GM12878 (cell line): ENCODE measurements at regions of chr9 and their contacts with region 1.

Region 1: DNA sequence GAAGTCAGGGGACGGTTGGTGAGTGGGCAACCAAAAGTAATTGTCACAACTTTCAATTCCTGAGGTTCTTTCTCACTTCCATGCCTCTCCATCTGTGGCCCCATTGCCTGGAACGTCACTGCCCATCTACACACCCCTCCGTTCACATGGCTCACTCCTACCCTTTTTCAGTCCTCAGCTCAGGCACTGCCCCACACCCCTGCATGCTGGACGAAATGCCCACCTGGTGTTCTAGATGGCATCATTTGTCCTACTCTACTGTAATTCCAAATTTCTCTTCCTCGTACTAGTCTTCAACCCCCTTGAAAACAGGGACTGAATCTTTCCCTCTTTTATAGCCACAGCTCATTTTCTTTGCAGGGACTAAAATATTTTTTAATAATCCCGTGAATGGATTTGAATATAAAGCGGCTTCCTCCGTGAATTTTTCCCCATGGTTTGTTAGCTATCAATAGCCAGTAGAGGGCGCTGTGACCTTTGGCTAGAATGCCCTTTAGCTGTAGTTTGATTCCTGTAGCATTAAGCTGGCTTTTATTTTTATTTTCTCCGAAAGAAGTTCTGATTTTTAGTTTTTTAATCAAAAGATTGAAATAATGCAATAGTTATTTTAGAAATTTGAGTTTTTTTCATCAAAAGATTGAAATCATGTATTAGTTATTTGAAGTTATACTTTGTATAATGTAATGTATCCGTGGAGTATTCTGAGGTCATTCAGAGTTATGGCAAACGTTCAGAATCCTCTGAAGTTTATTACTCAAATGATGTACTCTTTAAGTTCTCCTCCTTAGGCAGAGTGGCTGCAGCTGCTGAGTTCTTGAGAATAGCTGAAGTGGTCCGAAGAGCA is 232.1 kb downstream of the SH3GL2 start:
- DNase-seq: no peak
- ATAC-seq: peak; percentile 75
- H3K4me3 ChIP-seq: no peak overlapping the region
- H3K27ac ChIP-seq: no peak overlapping the region
- H3K4me1 ChIP-seq: no peaks in the 10 kb centered on the region
- H3K27me3 ChIP-seq: no peaks in the 10 kb centered on the region
- CTCF ChIP-seq: peak; percentile 75 to 77 (median 75)
- EP300 ChIP-seq: no peak
- POLR2A ChIP-seq: no peak
- RAD21 ChIP-seq: peak; percentile 96

Region 2: DNA sequence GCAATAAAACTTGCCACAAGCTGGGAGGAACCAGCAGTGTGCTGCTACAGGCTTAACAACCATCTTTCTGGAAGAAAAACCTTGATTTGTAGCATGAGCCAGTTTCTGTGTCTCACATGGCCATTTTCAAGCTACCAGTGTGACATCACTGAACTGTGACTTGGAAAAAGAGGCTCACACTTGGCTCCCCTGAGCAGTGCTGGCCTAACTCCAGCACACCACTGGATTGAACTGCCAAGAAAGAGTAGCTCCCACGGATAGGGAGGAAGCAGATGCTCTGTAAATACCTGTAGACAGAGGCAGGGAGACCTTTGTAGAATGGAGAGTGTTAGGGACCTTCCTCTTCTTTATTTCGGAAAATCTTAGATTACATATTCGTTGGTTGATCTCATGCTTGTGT is 34.2 kb before region 1 on chr9:
- CTCF ChIA-PET with region 1: no interaction called
- POLR2A ChIA-PET with region 1: no interaction called
- RAD21 ChIA-PET with region 1: no interaction called
- SMC1A ChIA-PET with region 1: no interaction called
- in situ Hi-C with region 1: no loop called
- intact Hi-C with region 1: no loop called
- DNase-seq: no peak
- ATAC-seq: no peak
- H3K4me3 ChIP-seq: no peak overlapping the region
- H3K27ac ChIP-seq: no peak overlapping the region
- H3K4me1 ChIP-seq: no peaks in the 10 kb centered on the region
- H3K27me3 ChIP-seq: no peaks in the 10 kb centered on the region
- CTCF ChIP-seq: no peak
- EP300 ChIP-seq: no peak
- POLR2A ChIP-seq: no peak
- RAD21 ChIP-seq: no peak

Region 3: DNA sequence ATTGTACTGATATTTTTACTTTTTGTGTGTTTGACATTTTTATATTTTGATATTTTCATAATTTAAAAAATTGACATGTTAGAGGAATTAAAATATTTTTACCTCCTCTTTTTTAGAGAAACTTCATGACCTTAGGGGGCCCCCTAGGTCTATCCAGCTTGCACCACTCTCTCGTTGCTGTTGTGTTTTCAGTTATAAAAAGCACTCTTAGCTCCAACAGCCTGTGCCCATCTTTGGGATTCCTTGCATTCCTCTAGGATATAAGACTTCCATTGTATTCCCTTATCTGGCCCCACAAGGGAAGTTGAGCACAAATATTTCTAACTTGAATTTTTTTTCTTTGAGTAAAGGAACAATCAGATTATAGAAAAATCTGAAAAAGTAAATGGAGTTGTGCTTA is 13.2 kb after region 1 on chr9:
- CTCF ChIA-PET with region 1: interaction called, 10 read pairs
- POLR2A ChIA-PET with region 1: no interaction called
- RAD21 ChIA-PET with region 1: no interaction called
- SMC1A ChIA-PET with region 1: interaction called, 4 read pairs
- in situ Hi-C with region 1: no loop called
- intact Hi-C with region 1: no loop called
- DNase-seq: no peak
- ATAC-seq: no peak
- H3K4me3 ChIP-seq: no peak overlapping the region
- H3K27ac ChIP-seq: no peak overlapping the region
- H3K4me1 ChIP-seq: no peaks in the 10 kb centered on the region
- H3K27me3 ChIP-seq: peaks cover 0 to 1% of the 10 kb centered on the region in 2 experiments; a peak in 1 of 4 replicates
- CTCF ChIP-seq: no peak
- EP300 ChIP-seq: no peak
- POLR2A ChIP-seq: no peak
- RAD21 ChIP-seq: no peak

Region 4: GRCh38 chr9:17900606-17901005 is 89.7 kb after region 1 on chr9:
- CTCF ChIA-PET with region 1: no interaction called
- POLR2A ChIA-PET with region 1: no interaction called
- RAD21 ChIA-PET with region 1: no interaction called
- SMC1A ChIA-PET with region 1: no interaction called
- in situ Hi-C with region 1: no loop called
- intact Hi-C with region 1: no loop called
- DNase-seq: no peak
- ATAC-seq: no peak
- H3K4me3 ChIP-seq: no peak overlapping the region
- H3K27ac ChIP-seq: no peak overlapping the region
- H3K4me1 ChIP-seq: no peaks in the 10 kb centered on the region
- H3K27me3 ChIP-seq: peaks cover 0 to 3% of the 10 kb centered on the region in 2 experiments
- CTCF ChIP-seq: no peak
- EP300 ChIP-seq: no peak
- POLR2A ChIP-seq: no peak
- RAD21 ChIP-seq: no peak

Region 5: DNA sequence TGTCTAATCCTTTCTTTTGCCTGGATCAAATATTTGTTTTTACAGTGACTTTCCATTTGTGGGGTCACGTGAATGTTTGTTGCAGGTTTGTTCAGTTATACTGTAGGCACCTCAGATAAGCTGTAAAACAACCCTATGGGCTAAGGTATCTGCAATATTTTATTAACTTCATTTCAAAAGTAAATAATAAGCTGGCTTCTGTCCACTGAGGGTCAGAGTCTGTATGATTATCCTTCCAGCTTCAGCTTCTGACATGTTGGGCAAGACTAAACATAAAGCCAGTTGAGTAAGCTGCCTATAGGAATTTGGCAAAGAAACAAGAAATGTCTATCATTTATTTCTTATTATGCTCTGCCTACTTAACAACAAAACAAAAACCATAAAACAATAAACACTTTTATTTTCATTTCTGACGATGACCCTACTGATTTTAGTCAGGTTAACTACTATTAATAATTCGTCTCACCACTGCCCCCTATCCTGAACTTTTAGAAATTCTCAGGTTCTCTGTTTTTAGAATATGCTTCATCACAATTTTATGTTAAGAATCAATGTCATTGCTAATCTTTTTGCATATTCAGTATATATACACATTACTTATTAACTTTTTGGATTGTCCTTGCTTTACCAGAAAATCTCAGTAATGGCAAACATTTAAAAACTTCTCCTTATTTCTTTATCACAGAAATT is 249.4 kb after region 1 on chr9:
- CTCF ChIA-PET with region 1: interaction called, 7 read pairs
- POLR2A ChIA-PET with region 1: no interaction called
- RAD21 ChIA-PET with region 1: interaction called, 5 read pairs
- SMC1A ChIA-PET with region 1: interaction called, 16 read pairs
- in situ Hi-C with region 1: no loop called
- intact Hi-C with region 1: loop called (anchors 2 kb)
- DNase-seq: no peak
- ATAC-seq: no peak
- H3K4me3 ChIP-seq: no peak overlapping the region
- H3K27ac ChIP-seq: no peak overlapping the region
- H3K4me1 ChIP-seq: no peaks in the 10 kb centered on the region
- H3K27me3 ChIP-seq: peaks cover 0 to 1% of the 10 kb centered on the region in 2 experiments; a peak in 1 of 4 replicates
- CTCF ChIP-seq: peak in 2 of 3 experiments; percentile 21 to 32; a peak in 3 of 6 replicates
- EP300 ChIP-seq: no peak
- POLR2A ChIP-seq: no peak
- RAD21 ChIP-seq: no peak

Region 6: DNA sequence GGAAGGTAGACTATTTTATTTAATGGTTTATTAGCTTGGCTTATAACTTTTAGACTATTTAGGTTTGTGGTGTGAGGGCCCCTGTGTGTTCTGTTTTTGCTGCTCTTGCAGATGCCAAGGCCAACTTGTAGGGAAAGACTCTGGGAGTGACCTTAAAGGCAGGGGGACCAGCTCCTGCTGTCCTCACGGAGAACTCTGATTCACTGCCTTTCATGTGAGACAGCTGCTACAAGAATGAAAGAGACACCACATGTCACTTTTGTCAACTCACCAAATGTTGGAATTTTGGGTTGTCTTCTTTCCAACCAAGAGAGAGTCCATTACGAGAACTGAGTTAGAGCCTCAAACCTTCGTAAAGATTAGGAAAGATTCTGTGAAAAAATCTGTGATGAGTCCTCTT is 404.7 kb after region 1 on chr9:
- CTCF ChIA-PET with region 1: interaction called, 153 read pairs
- POLR2A ChIA-PET with region 1: no interaction called
- RAD21 ChIA-PET with region 1: interaction called, 50 read pairs
- SMC1A ChIA-PET with region 1: interaction called, 86 read pairs
- in situ Hi-C with region 1: no loop called
- intact Hi-C with region 1: loop called (anchors 1 kb)
- DNase-seq: no peak
- ATAC-seq: no peak
- H3K4me3 ChIP-seq: no peak overlapping the region
- H3K27ac ChIP-seq: no peak overlapping the region
- H3K4me1 ChIP-seq: no peaks in the 10 kb centered on the region
- H3K27me3 ChIP-seq: no peaks in the 10 kb centered on the region
- CTCF ChIP-seq: no peak
- EP300 ChIP-seq: no peak
- POLR2A ChIP-seq: no peak
- RAD21 ChIP-seq: no peak

Region 7: DNA sequence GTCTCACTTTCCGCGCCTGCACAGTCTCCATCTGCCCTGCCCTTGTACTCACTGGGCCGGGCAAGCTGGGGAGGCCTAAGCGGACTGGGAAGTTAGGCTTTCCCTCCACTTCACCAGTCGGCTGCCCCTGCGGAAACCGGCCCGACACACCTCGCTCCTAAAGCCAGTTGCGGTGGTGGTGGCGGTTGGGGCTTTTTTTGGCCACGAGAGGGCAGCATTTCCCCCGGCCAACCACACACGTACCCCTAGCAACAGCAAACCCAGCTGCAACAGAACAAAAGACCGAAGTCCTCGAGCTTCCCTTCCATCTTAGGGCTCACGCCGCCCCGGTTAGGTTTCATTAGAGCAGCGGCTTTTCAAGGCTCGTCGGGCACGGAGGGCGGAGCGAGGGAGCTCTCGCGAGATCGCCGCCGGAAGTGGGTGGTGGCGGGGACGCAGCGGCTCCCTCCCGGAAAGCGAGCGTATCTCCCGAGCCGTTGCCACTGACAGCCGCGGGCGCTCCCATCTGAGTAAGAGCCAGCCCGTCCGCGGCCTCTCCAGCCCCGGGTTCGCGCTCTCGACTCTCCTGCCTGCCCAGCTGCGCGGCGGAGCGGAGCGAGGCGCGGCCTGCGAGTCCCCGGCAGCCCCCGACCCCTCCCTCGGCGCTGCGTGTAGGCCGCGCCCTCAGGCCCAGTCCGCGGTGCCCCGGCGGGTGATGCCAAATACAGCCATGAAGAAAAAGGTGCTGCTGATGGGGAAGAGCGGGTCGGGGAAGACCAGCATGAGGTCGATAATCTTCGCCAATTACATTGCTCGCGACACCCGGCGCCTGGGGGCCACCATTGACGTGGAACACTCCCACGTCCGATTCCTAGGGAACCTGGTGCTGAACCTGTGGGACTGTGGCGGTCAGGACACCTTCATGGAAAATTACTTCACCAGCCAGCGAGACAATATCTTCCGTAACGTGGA is 1238.3 kb after region 1 on chr9 and contains the start of gene RRAGA:
- CTCF ChIA-PET with region 1: no interaction called
- POLR2A ChIA-PET with region 1: no interaction called
- RAD21 ChIA-PET with region 1: no interaction called
- SMC1A ChIA-PET with region 1: no interaction called
- in situ Hi-C with region 1: loop called (anchors 25 kb)
- intact Hi-C with region 1: no loop called
- DNase-seq: peak; percentile 90
- ATAC-seq: peak; percentile 93
- H3K4me3 ChIP-seq: peak within 1 kb of the TSS; percentile 88
- H3K27ac ChIP-seq: peak within 1 kb of the TSS; percentile 82
- H3K4me1 ChIP-seq: peaks cover 5% of the 10 kb centered on the region
- H3K27me3 ChIP-seq: no peaks in the 10 kb centered on the region
- CTCF ChIP-seq: peak; percentile 74 to 89 (median 79)
- EP300 ChIP-seq: peak; percentile 28 to 54; a peak in 1 of 4 replicates
- POLR2A ChIP-seq: peak; percentile 95
- RAD21 ChIP-seq: peak; percentile 36; the same call in 1 of the 2 replicates
- polyA plus RNA-seq, gene RRAGA: 10.1 to 19.3 TPM